ENCODE measurements at regions of chr6 and their contacts with region 1.

Region 1: DNA sequence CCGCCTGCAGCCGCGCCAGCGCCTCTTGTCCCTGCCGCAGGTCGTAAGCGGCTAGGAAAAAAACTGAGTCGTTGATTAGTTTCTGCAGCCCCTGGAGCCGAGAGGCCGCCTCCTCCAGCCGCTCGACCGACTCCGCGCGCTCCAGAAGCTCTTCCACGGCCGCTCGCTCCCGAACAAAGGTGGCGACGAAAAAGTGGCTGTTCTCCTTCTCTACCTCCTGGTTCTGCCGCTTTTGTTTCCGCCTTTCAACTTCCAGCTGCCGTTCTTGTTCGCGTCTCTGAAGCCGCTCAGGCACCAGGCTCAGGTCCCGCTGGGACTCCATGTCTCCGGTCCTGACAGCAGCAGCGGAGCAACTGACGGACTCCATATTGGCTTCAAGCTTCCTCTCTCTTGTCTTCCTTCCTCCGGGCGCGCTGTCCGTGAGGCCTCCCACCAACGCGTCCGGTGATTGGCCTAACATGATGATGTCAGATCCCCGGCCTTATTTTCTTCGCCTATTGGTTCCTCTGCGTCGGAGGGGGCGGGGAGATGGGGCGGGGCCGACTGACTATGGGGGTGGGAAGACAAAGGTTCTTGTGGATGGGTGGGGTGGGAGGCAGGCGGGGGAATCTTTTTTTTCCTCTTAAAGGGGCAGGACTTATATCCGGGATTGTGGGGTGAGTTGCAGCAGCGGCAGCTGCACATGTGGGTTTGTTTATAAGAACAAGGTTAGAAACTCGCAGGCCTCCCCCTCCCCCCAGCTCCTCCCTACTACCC is at the start of gene TBCC:
- DNase-seq: peak; percentile 97
- ATAC-seq: peak; percentile 84
- H3K4me3 Mint-ChIP-seq: peak within 1 kb of the TSS; percentile 84
- H3K27ac Mint-ChIP-seq: peak within 1 kb of the TSS; percentile 100
- H3K4me1 Mint-ChIP-seq: peaks cover 27% of the 10 kb centered on the region
- H3K27me3 Mint-ChIP-seq: no peaks in the 10 kb centered on the region
- total RNA-seq, gene TBCC: 14.7 to 15.3 TPM

Region 2: GRCh38 chr6:42050266-42051032 is 695.4 kb before region 1 on chr6 and contains the start of gene TAF8:
- CTCF ChIA-PET with region 1: no interaction called
- POLR2A ChIA-PET with region 1: no interaction called
- intact Hi-C with region 1: loop called in 1 of 2 experiments (anchors 1 kb)
- DNase-seq: peak; percentile 94
- ATAC-seq: peak; percentile 76
- H3K4me3 Mint-ChIP-seq: peak within 1 kb of the TSS; percentile 88
- H3K27ac Mint-ChIP-seq: peak within 1 kb of the TSS; percentile 96
- H3K4me1 Mint-ChIP-seq: peaks cover 64% of the 10 kb centered on the region
- H3K27me3 Mint-ChIP-seq: no peaks in the 10 kb centered on the region
- total RNA-seq, gene TAF8: 52.3 to 53.1 TPM

Region 3: DNA sequence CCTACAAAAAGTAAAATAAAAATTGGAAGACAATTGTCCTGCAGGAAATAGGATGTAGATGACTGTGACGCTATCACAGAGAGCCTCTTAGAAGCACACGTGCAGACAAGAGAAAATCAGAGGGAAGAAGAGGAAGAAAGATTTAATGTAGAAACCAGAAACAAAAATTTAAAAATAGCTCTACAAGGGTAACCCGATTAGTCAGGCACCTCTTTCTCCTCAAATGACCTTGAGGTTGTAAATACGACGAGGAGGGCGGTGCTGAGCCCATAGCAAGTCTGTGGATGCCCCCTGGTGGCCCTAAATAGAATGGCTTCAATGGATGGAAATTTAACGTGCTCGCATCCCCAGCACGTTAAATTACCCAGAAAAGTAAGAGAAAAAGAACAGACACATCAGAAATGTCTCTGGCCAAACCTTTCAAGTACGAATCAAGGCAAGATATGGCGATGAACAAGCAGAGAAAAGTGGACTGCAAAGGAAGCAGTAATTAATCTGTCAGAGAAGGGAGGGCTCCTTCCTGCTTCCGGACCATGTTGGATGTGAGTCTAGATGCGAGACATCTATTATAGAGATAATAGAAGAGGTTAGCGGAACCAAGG is 19.3 kb before region 1 on chr6:
- CTCF ChIA-PET with region 1: interaction called, 15 read pairs
- POLR2A ChIA-PET with region 1: interaction called, 12 read pairs
- intact Hi-C with region 1: loop called (anchors 1 kb)
- DNase-seq: peak; percentile 85
- ATAC-seq: peak; percentile 98
- H3K4me3 Mint-ChIP-seq: peak overlapping the region; percentile 69
- H3K27ac Mint-ChIP-seq: peak overlapping the region; percentile 95
- H3K4me1 Mint-ChIP-seq: peaks cover 19% of the 10 kb centered on the region
- H3K27me3 Mint-ChIP-seq: no peaks in the 10 kb centered on the region

Region 4: GRCh38 chr6:42808492-42809483 is 62.9 kb after region 1 on chr6:
- CTCF ChIA-PET with region 1: no interaction called
- POLR2A ChIA-PET with region 1: no interaction called
- intact Hi-C with region 1: no loop called
- DNase-seq: no peak
- ATAC-seq: no peak
- H3K4me3 Mint-ChIP-seq: no peak overlapping the region
- H3K27ac Mint-ChIP-seq: peak overlapping the region; percentile 24
- H3K4me1 Mint-ChIP-seq: peaks cover 21% of the 10 kb centered on the region
- H3K27me3 Mint-ChIP-seq: no peaks in the 10 kb centered on the region

Region 5: GRCh38 chr6:42879372-42880239 is 133.7 kb after region 1 on chr6 and contains the start of gene RPL7L1:
- CTCF ChIA-PET with region 1: interaction called, 5 read pairs
- POLR2A ChIA-PET with region 1: interaction called, 16 read pairs
- intact Hi-C with region 1: loop called (anchors 1 kb)
- DNase-seq: peak; percentile 89
- ATAC-seq: peak; percentile 96
- H3K4me3 Mint-ChIP-seq: peak within 1 kb of the TSS; percentile 99
- H3K27ac Mint-ChIP-seq: peak within 1 kb of the TSS; percentile 100
- H3K4me1 Mint-ChIP-seq: peaks cover 20% of the 10 kb centered on the region
- H3K27me3 Mint-ChIP-seq: no peaks in the 10 kb centered on the region
- total RNA-seq, gene RPL7L1: 124 to 152 TPM

Region 6: GRCh38 chr6:42960243-42961019 is 214.5 kb after region 1 on chr6 and contains the start of gene GNMT:
- CTCF ChIA-PET with region 1: no interaction called
- POLR2A ChIA-PET with region 1: no interaction called
- intact Hi-C with region 1: no loop called
- DNase-seq: peak; percentile 57
- ATAC-seq: peak; percentile 53
- H3K4me3 Mint-ChIP-seq: peak within 1 kb of the TSS; percentile 31
- H3K27ac Mint-ChIP-seq: no peak within 1 kb of the TSS
- H3K4me1 Mint-ChIP-seq: peaks cover 11% of the 10 kb centered on the region
- H3K27me3 Mint-ChIP-seq: no peaks in the 10 kb centered on the region
- total RNA-seq, gene GNMT: 0.50 TPM in 1 of 2 experiments, not detected in the other

Region 7: GRCh38 chr6:42984001-42984923 is 238.4 kb after region 1 on chr6 and contains the start of gene PPP2R5D:
- CTCF ChIA-PET with region 1: no interaction called
- POLR2A ChIA-PET with region 1: interaction called, 4 read pairs
- intact Hi-C with region 1: loop called in 1 of 2 experiments (anchors 1 kb)
- DNase-seq: peak; percentile 98
- ATAC-seq: peak; percentile 92
- H3K4me3 Mint-ChIP-seq: peak within 1 kb of the TSS; percentile 79
- H3K27ac Mint-ChIP-seq: peak within 1 kb of the TSS; percentile 82
- H3K4me1 Mint-ChIP-seq: peaks cover 52% of the 10 kb centered on the region
- H3K27me3 Mint-ChIP-seq: no peaks in the 10 kb centered on the region
- total RNA-seq, gene PPP2R5D: 51.0 to 57.3 TPM

Region 8: GRCh38 chr6:43174263-43175112 is 428.6 kb after region 1 on chr6:
- CTCF ChIA-PET with region 1: no interaction called
- POLR2A ChIA-PET with region 1: interaction called, 3 read pairs
- intact Hi-C with region 1: loop called in 1 of 2 experiments (anchors 1 kb)
- DNase-seq: peak; percentile 98
- ATAC-seq: peak; percentile 80
- H3K4me3 Mint-ChIP-seq: peak overlapping the region; percentile 85
- H3K27ac Mint-ChIP-seq: peak overlapping the region; percentile 79
- H3K4me1 Mint-ChIP-seq: peaks cover 38% of the 10 kb centered on the region
- H3K27me3 Mint-ChIP-seq: no peaks in the 10 kb centered on the region